PC-3 (cell line): ENCODE measurements at regions of chr1 and their contacts with region 1.

Region 1: GRCh38 chr1:100543640-100544039 is 5.7 kb downstream of the GPR88 start:
- DNase-seq: peak; percentile 79
- ATAC-seq: peak; percentile 47
- H3K4me3 ChIP-seq: no peak overlapping the region
- H3K27ac ChIP-seq: no peak overlapping the region
- H3K4me1 ChIP-seq: peaks cover 9% of the 10 kb centered on the region
- H3K27me3 ChIP-seq: peaks cover 23% of the 10 kb centered on the region
- CTCF ChIP-seq: peak; percentile 74

Region 2: GRCh38 chr1:100474834-100475233 is 68.8 kb before region 1 on chr1:
- CTCF ChIA-PET with region 1: no interaction called
- POLR2A ChIA-PET with region 1: no interaction called
- intact Hi-C with region 1: loop called (anchors 10 kb)
- DNase-seq: no peak
- ATAC-seq: no peak
- H3K4me3 ChIP-seq: no peak overlapping the region
- H3K27ac ChIP-seq: no peak overlapping the region
- H3K4me1 ChIP-seq: no peaks in the 10 kb centered on the region
- H3K27me3 ChIP-seq: no peaks in the 10 kb centered on the region
- CTCF ChIP-seq: no peak

Region 3: DNA sequence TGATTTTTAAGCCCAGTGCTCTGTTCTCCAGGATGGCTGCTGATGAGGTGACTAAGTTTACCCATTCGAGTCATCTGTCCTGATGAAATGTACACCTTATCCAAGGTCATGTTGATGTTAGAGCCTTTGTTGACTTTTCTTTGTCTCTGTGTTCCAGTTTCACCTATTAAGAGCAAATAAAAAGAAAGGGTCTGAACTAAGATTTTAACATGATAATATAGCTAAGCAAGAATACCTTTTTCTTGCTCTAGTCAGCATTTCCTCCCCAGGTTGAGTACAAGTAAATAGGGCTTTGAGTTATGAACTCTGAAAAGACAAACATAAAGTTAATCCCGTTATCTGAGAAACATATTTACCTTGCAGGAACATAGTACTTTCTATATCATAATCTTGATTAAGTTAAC is 57.8 kb before region 1 on chr1:
- CTCF ChIA-PET with region 1: no interaction called
- POLR2A ChIA-PET with region 1: no interaction called
- intact Hi-C with region 1: no loop called
- DNase-seq: peak; percentile 47
- ATAC-seq: peak; percentile 63
- H3K4me3 ChIP-seq: no peak overlapping the region
- H3K27ac ChIP-seq: no peak overlapping the region
- H3K4me1 ChIP-seq: no peaks in the 10 kb centered on the region
- H3K27me3 ChIP-seq: no peaks in the 10 kb centered on the region
- CTCF ChIP-seq: no peak